MCF 10A (cell line): ENCODE measurements at regions of chr5 and their contacts with region 1.

Region 1: DNA sequence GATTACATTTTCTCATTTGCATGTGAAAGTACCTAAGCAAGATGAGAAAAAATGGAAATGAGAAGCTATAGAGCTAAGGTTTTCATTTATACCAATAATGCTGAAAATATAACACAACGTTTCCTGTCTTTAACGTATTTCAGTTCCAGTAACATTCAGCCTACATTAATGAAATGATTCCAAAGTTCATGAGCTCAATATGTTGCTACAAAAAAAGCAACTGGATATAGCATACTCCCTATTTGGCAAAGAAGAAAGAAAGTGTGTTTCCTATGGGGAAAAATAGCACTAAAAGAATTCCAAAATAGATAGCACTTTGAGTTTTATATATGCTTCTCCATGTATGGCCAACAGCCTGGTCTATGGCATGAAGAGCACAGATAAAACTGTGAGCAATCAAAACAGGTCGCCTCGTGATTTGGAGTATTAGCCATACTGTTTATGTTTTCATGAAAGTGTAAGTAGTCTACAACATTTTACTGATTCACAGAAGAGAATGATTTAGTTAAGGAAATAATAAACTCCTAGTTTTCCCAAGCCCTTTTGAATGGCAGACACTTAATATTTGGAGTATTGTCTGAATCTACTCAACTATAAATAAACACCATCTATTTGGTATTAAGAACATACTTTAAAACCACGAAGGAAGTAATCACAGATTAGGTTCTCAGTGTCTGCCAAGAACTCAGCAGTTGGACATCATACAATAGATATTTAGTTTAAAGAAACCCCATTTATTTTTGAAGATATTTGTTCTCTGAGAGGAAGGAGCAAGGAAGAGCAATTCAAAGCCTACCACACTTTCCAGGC is 258.7 kb upstream of the RASA1 start:
- DNase-seq: no peak
- H3K4me3 Mint-ChIP-seq: no peak overlapping the region
- H3K27ac Mint-ChIP-seq: no peak overlapping the region
- H3K4me1 Mint-ChIP-seq: peaks cover 5% of the 10 kb centered on the region
- H3K27me3 Mint-ChIP-seq: peaks cover 53% of the 10 kb centered on the region
- CTCF ChIP-seq: no peak

Region 2: GRCh38 chr5:86880785-86881492 is 128.0 kb before region 1 on chr5:
- CTCF ChIA-PET with region 1: interaction called, 21 read pairs
- POLR2A ChIA-PET with region 1: no interaction called
- intact Hi-C with region 1: loop called (anchors 1 kb)
- DNase-seq: peak; percentile 71
- H3K4me3 Mint-ChIP-seq: no peak overlapping the region
- H3K27ac Mint-ChIP-seq: no peak overlapping the region
- H3K4me1 Mint-ChIP-seq: no peaks in the 10 kb centered on the region
- H3K27me3 Mint-ChIP-seq: peaks cover 74% of the 10 kb centered on the region
- CTCF ChIP-seq: peak; percentile 64

Region 3: DNA sequence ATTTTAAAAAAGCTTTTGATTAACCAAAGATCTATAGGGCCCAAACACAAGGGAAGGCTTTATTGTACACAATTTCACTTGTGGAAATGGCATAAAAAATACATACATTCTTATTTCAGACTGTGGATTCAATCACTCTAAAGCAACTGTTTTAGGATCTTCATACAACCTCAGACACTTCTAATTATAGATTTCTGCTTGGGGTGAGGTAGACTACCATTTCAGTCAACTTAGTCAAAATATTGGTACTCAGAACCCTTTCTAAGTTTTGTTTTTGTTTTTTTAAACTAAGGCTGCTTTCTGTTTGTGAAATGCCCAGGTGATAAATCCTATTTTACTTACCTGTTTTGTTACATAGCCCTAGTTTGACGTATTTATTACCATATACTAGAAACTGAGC is 25.7 kb before region 1 on chr5:
- CTCF ChIA-PET with region 1: interaction called, 10 read pairs
- POLR2A ChIA-PET with region 1: no interaction called
- intact Hi-C with region 1: no loop called
- DNase-seq: no peak
- H3K4me3 Mint-ChIP-seq: no peak overlapping the region
- H3K27ac Mint-ChIP-seq: no peak overlapping the region
- H3K4me1 Mint-ChIP-seq: peaks cover 8% of the 10 kb centered on the region
- H3K27me3 Mint-ChIP-seq: peaks cover 12% of the 10 kb centered on the region
- CTCF ChIP-seq: no peak